Transverse colon (tissue), 4 donors: ENCODE measurements at regions of chr18 and their contacts with region 1.

Region 1: GRCh38 chr18:13520306-13520705 is 206.1 kb downstream of the FAM210A start:
- DNase-seq: no peak
- H3K4me3 ChIP-seq: no peak overlapping the region
- H3K27ac ChIP-seq: peak overlapping the region in 1 of 4 donors; percentile 13
- H3K4me1 ChIP-seq: no peaks in the 10 kb centered on the region
- H3K27me3 ChIP-seq: no peaks in the 10 kb centered on the region
- CTCF ChIP-seq: no peak
- EP300 ChIP-seq: peak; percentile 50
- POLR2A ChIP-seq: no peak

Region 2: DNA sequence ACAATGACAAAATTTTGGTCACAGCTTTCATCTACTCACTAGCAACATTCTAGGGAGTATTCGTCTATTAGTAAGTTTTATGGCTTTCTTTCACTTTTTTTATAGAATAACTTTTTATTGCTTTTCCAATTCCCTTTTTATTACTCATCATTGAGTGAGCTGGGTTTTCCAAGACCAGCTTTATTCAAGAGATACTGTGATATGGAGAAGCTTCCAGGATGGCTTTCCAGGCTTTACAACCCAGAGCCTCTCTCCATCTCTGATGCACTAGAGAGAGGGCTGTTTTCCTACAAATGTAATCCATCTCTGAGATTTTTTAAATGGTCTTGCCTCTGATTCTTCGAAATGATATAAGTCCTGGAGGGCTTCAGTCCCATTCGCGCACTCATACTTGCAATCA is 183.5 kb before region 1 on chr18:
- in situ Hi-C with region 1: no loop called
- intact Hi-C with region 1: no loop called
- DNase-seq: no peak
- H3K4me3 ChIP-seq: no peak overlapping the region
- H3K27ac ChIP-seq: no peak overlapping the region
- H3K4me1 ChIP-seq: peaks cover 0 to 11% (median 0%) of the 10 kb centered on the region in 4 donors
- H3K27me3 ChIP-seq: no peaks in the 10 kb centered on the region
- CTCF ChIP-seq: no peak
- EP300 ChIP-seq: no peak
- POLR2A ChIP-seq: no peak

Region 3: GRCh38 chr18:13381944-13382365 is 138.4 kb before region 1 on chr18:
- in situ Hi-C with region 1: no loop called
- intact Hi-C with region 1: loop called (anchors 10 kb)
- DNase-seq: peak; percentile 66
- H3K4me3 ChIP-seq: peak overlapping the region in 3 of 4 donors; percentile 15 to 41 (median 27)
- H3K27ac ChIP-seq: peak overlapping the region; percentile 74 to 89 (median 84)
- H3K4me1 ChIP-seq: peaks cover 12 to 36% (median 30%) of the 10 kb centered on the region in 4 donors
- H3K27me3 ChIP-seq: no peaks in the 10 kb centered on the region
- CTCF ChIP-seq: peak in 1 of 5 experiments; percentile 1
- EP300 ChIP-seq: no peak
- POLR2A ChIP-seq: no peak

Region 4: GRCh38 chr18:13831864-13832508 is 311.7 kb after region 1 on chr18:
- in situ Hi-C with region 1: no loop called
- intact Hi-C with region 1: no loop called
- DNase-seq: no peak
- H3K4me3 ChIP-seq: no peak overlapping the region
- H3K27ac ChIP-seq: no peak overlapping the region
- H3K4me1 ChIP-seq: no peaks in the 10 kb centered on the region
- H3K27me3 ChIP-seq: peaks cover 37% of the 10 kb centered on the region
- CTCF ChIP-seq: no peak
- EP300 ChIP-seq: no peak
- POLR2A ChIP-seq: no peak

Region 5: DNA sequence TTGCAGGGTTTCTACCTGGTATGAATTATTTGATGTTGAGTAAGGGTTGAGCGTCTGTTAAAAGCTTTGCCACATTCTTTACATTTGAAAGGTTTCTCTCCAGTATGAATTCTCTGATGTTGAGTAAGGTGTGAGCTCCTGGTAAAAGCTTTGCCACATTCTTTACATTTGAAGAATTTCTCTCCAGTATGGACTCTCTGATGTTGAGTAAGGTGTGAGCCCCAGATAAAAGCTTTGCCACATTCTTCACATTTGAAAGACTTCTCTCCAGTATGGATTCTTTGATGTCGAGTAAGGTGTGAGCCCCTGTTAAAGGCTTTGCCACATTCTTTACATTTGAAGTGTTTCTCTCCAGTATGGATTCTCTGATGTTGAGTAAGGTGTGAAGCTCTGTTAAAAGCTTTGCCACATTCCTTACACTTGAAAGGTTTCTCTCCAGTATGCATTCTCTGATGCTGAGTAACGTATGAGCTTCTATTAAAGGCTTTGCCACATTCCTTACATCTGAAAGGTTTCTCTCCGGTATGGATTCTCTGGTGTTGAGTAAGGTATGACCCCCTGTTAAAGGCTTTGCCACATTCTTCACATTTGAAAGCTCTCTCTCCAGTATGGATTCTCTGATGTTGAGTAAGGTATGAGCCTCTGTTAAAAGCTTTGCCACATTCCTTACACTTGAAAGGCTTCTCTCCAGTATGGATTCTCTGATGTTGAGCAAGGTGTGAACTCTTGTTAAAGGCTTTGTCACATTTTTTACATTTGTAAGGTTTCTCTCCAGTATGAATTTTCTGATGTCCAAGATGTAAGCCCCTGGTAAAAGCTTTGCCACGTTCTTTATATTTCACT is 584.8 kb after region 1 on chr18:
- in situ Hi-C with region 1: no loop called
- intact Hi-C with region 1: no loop called
- DNase-seq: no peak
- H3K4me3 ChIP-seq: no peak overlapping the region
- H3K27ac ChIP-seq: no peak overlapping the region
- H3K4me1 ChIP-seq: no peaks in the 10 kb centered on the region
- H3K27me3 ChIP-seq: no peaks in the 10 kb centered on the region
- CTCF ChIP-seq: no peak
- EP300 ChIP-seq: no peak
- POLR2A ChIP-seq: no peak